ENCODE measurements at regions of chr19 and their contacts with region 1.

Region 1: DNA sequence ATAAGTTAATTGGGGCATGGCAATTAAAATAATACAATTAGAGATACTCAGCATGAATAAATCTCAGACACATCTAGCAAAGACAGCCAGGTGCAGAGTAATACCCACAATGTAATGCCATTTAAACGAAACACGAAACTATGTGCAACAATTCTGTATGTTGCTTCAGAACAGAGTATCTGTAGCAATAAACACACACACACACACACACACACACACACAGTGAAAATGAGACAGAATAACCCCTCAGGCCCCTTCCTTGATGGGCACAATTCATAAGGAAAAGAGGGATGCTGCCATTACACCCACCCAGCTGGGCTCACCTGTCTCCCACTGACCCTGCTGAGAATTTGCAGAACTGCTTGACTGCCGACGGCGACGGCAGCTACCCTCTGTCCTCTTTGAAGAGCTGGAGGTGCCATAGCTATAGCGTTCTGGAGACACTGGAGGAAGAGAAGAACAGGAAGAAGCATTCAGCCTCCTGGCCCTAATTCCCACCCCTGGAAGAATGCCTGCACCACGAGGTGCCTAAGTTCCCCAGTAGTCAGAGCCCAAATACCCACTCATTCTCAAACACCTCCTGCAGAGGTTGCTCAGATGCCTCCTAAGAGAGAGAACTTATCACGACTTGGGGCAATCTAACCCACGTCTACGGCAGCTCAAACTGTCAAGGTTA is 2.5 kb downstream of the DEDD2 start:
- DNase-seq: no peak
- H3K4me3 ChIP-seq: peak overlapping the region; percentile 75; the same call in 1 of the 2 replicates
- H3K27ac ChIP-seq: no peak overlapping the region
- H3K4me1 ChIP-seq: peaks cover 40% of the 10 kb centered on the region
- H3K27me3 ChIP-seq: no peaks in the 10 kb centered on the region
- CTCF ChIP-seq: no peak

Region 2: GRCh38 chr19:42191855-42192254 is 23.1 kb before region 1 on chr19:
- CTCF ChIA-PET with region 1: no interaction called
- POLR2A ChIA-PET with region 1: no interaction called
- intact Hi-C with region 1: loop called (anchors 2 kb)
- DNase-seq: peak; percentile 67 to 98
- H3K4me3 ChIP-seq: no peak overlapping the region
- H3K27ac ChIP-seq: peak overlapping the region; percentile 94
- H3K4me1 ChIP-seq: peaks cover 34% of the 10 kb centered on the region
- H3K27me3 ChIP-seq: no peaks in the 10 kb centered on the region
- CTCF ChIP-seq: no peak

Measured in PC-9 (cell line).